Heart right ventricle (tissue), 16 donors: ENCODE measurements at regions of chr1 and their contacts with region 1.

Region 1: GRCh38 chr1:223133824-223134435 is 9.1 kb downstream of the TLR5 start:
- DNase-seq: peak; percentile 83 to 85
- ATAC-seq: peak; percentile 87 to 93 (median 90)
- H3K4me3 ChIP-seq: peak overlapping the region in 9 of 10 donors; percentile 17 to 54 (median 48)
- H3K27ac ChIP-seq: peak overlapping the region in 7 of 10 donors; percentile 7 to 56 (median 36)
- H3K4me1 ChIP-seq: peaks cover 6 to 56% (median 11%) of the 10 kb centered on the region in 9 donors
- H3K27me3 ChIP-seq: peaks cover 0 to 6% (median 0%) of the 10 kb centered on the region in 7 donors
- CTCF ChIP-seq: peak; percentile 95 to 98 (median 97)

Region 2: GRCh38 chr1:223022641-223023473 is 111.1 kb before region 1 on chr1:
- intact Hi-C with region 1: no loop called
- DNase-seq: peak; percentile 24 to 41
- ATAC-seq: peak; percentile 82 to 96 (median 88)
- H3K4me3 ChIP-seq: no peak overlapping the region
- H3K27ac ChIP-seq: peak overlapping the region; percentile 35 to 82 (median 60)
- H3K4me1 ChIP-seq: peaks cover 0 to 48% (median 20%) of the 10 kb centered on the region in 9 donors
- H3K27me3 ChIP-seq: no peaks in the 10 kb centered on the region
- CTCF ChIP-seq: no peak

Region 3: GRCh38 chr1:223074445-223075300 is 59.3 kb before region 1 on chr1:
- intact Hi-C with region 1: no loop called
- DNase-seq: peak in 1 of 2 donors; percentile 45
- ATAC-seq: peak; percentile 55 to 68 (median 60)
- H3K4me3 ChIP-seq: peak overlapping the region in 1 of 10 donors; percentile 29
- H3K27ac ChIP-seq: peak overlapping the region in 8 of 10 donors; percentile 7 to 83 (median 63)
- H3K4me1 ChIP-seq: peaks cover 16 to 58% (median 38%) of the 10 kb centered on the region in 9 donors
- H3K27me3 ChIP-seq: no peaks in the 10 kb centered on the region
- CTCF ChIP-seq: no peak

Region 4: DNA sequence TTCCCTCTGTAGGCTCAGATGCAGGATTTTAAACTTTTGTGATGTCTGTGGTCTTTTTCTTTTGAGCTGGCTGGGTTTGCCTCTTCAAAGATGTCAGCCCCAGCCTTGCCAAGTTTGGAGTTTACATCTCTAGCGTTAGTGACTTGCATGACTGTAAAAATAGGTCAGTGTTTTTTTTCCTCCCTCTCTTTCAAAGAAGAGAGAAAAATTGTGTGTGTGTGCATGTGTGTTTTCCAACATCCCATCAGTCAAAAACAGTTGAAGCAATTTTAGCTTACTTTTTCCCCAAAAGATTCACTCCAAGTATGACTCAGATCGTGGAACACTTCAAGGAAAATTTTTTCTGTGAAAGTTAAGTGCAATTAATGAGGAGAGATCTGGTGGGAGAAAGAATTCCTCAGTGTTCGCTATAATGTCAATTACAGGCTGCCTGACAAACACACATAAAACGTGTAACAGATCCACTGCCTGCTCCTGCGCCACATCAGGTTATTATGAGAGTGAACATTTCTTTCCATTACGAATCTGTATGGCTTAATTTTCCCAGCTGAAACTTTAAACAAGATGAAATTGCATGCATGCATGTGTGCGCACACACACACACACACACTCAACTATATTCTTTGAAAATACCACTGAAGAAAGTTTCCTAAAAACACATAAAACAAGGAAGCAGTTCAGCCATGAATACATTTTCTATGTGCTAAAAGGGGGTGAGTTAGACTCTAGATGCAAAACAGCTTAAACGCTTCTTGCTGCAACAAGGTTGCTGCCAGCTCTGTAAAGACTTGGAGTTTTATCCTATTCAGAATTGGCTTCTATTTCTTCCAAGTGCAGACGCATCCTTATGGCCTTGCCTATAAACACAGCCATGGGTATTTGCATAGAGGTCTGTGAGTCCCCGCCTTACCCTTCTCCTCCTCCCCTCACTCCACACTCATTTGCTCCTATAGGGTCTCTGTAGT is 46.4 kb before region 1 on chr1:
- intact Hi-C with region 1: loop called in 2 of 10 experiments (anchors 5 kb)
- DNase-seq: peak in 1 of 2 donors; percentile 34
- ATAC-seq: peak in 5 of 8 donors; percentile 16 to 41 (median 25)
- H3K4me3 ChIP-seq: peak overlapping the region in 2 of 10 donors; percentile 5 to 13
- H3K27ac ChIP-seq: peak overlapping the region in 7 of 10 donors; percentile 27 to 62 (median 48)
- H3K4me1 ChIP-seq: peaks cover 0 to 20% (median 5%) of the 10 kb centered on the region in 9 donors
- H3K27me3 ChIP-seq: no peaks in the 10 kb centered on the region
- CTCF ChIP-seq: no peak

Region 5: DNA sequence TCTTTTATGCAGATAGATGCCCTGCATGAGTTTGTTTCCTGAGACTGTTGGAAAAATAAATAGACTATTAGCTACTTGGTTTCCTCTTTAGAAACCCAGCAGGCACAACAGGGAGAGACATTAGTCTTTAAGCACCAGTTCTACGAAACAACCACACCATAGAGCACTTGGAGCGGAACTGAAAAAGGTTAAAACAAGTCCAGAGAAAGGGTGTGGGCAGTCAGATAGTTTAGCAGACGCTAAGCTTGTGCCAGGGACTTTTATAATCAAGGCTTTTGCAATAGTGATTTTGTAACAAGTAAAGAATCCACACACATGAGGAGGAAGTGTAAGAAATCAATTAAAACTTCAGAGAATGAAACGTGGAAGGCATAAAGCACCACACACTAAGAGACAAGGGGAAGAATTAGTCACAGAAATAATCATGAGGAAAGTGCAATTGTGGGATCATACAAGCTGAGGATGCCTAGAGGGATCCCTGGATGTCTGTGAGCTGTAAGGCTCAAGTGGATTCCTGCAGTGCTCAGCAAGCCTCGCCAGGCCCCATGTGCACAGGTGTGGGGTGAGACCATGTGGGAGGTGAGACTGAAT is 46.9 kb after region 1 on chr1:
- intact Hi-C with region 1: no loop called
- DNase-seq: peak in 1 of 2 donors; percentile 23
- ATAC-seq: peak; percentile 70 to 90 (median 80)
- H3K4me3 ChIP-seq: no peak overlapping the region
- H3K27ac ChIP-seq: peak overlapping the region in 3 of 10 donors; percentile 17 to 71 (median 44)
- H3K4me1 ChIP-seq: peaks cover 0 to 53% (median 10%) of the 10 kb centered on the region in 9 donors
- H3K27me3 ChIP-seq: no peaks in the 10 kb centered on the region
- CTCF ChIP-seq: no peak

Region 6: DNA sequence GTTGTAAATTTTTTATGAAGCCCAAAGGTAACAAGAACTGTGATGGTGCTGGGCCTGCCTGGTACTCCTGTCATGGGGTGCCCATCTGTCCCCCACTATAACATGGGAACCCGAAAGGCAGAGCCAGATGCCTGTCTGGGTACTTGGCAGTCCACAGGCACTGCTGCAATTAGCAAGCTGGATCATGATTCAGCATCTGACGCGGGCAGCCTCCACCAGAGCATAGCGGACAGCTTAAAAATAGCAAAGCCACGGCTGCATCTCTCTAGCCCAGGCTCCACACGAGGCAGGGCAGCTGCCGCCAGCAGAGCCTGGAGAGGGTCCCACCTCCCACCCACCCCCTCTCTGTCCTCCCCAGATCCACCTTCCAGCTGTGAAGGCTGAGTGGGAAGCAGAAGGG is 207.2 kb after region 1 on chr1:
- intact Hi-C with region 1: loop called in 2 of 10 experiments (anchors 10 kb)
- DNase-seq: peak; percentile 58 to 69
- ATAC-seq: peak; percentile 80 to 96 (median 88)
- H3K4me3 ChIP-seq: no peak overlapping the region
- H3K27ac ChIP-seq: peak overlapping the region in 9 of 10 donors; percentile 9 to 82 (median 56)
- H3K4me1 ChIP-seq: peaks cover 0 to 64% (median 28%) of the 10 kb centered on the region in 9 donors
- H3K27me3 ChIP-seq: no peaks in the 10 kb centered on the region
- CTCF ChIP-seq: no peak

Region 7: GRCh38 chr1:223670458-223671168 is 536.7 kb after region 1 on chr1:
- intact Hi-C with region 1: loop called in 2 of 10 experiments (anchors 5 to 10 kb)
- DNase-seq: no peak
- ATAC-seq: peak in 1 of 8 donors; percentile 55
- H3K4me3 ChIP-seq: no peak overlapping the region
- H3K27ac ChIP-seq: no peak overlapping the region
- H3K4me1 ChIP-seq: no peaks in the 10 kb centered on the region
- H3K27me3 ChIP-seq: peaks cover 0 to 6% (median 0%) of the 10 kb centered on the region in 7 donors
- CTCF ChIP-seq: peak in 7 of 9 donors; percentile 39 to 56 (median 42)